GM18951 (cell line): ENCODE measurements at regions of chr7 and their contacts with region 1.

Region 1: GRCh38 chr7:104156842-104157277 is 51.0 kb downstream of the ORC5 start:
- POLR2A ChIP-seq: no peak

Region 2: GRCh38 chr7:103573479-103574058 is 583.3 kb before region 1 on chr7:
- in situ Hi-C with region 1: loop called (anchors 10 kb)
- POLR2A ChIP-seq: no peak